Activated CD4-positive, alpha-beta T cell treated with anti-CD3 and anti-CD28 coated beads, Interleukin-2, amount 10 ng/mL, durations not matched to agents 7 days and 5 days (primary cell): ENCODE measurements at regions of chr5 and their contacts with region 1.

Region 1: GRCh38 chr5:148740966-148741742 is 85.3 kb upstream of the ADRB2 start:
- DNase-seq: no peak
- H3K4me3 Mint-ChIP-seq: no peak overlapping the region
- H3K27ac Mint-ChIP-seq: no peak overlapping the region
- H3K4me1 Mint-ChIP-seq: no peaks in the 10 kb centered on the region
- H3K27me3 Mint-ChIP-seq: peaks cover 20% of the 10 kb centered on the region

Region 2: DNA sequence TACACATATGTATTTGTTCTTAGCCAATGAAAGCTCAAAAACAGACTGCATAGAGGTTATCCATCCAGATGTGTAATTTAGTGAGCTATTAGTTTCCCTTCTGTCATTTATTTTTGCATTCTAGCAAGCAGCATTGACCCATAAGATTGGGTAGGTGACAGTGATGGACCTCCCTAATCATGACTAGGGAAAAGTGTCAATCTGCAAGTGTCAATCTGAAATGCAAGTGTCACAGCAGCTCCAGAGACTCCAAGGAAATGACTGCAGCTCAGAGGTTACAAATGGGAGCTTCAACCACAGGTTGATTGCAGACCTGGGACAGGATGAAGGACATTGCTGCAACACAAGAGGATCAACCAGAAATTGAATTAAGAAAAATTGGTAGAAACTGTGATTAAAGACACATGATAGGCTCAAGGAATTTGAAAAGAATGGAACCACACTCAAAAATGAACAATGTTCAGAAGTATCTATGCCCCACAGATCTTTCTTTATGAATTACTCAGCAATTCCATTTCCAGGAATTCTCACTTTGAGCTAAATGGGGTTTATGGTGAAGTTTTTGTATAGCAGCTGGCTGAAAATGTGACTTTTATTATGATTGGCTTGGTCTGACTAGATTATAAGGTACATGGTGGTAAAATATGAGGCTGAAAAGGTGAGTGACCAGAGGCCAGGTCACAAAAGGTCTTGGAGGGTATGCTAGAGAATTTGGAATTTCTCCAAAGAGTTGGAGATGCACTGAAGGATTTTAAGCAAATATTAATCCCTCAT is 27.2 kb before region 1 on chr5:
- CTCF ChIA-PET with region 1: no interaction called
- POLR2A ChIA-PET with region 1: no interaction called
- DNase-seq: no peak
- H3K4me3 Mint-ChIP-seq: no peak overlapping the region
- H3K27ac Mint-ChIP-seq: no peak overlapping the region
- H3K4me1 Mint-ChIP-seq: no peaks in the 10 kb centered on the region
- H3K27me3 Mint-ChIP-seq: peaks cover 13% of the 10 kb centered on the region

Region 3: DNA sequence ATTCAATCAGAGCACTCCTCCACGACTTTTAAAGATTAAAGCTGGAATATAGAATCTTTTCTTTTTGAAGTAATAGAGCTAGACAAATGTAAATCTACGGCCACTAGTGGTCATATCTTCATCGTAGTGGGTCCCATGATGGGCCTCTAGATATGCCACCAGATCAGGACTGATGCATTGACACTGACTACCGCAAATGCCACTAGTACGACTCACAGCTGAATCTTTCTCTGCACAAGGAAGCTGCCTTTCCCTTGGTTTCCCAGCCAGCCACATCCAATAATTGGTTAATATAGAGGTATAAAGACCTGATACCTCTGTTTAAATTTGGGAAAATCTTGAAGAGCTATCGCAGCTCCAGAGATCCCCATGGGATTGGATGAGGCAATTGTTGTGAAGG is 47.5 kb after region 1 on chr5:
- CTCF ChIA-PET with region 1: no interaction called
- POLR2A ChIA-PET with region 1: no interaction called
- DNase-seq: no peak
- H3K4me3 Mint-ChIP-seq: no peak overlapping the region
- H3K27ac Mint-ChIP-seq: no peak overlapping the region
- H3K4me1 Mint-ChIP-seq: peaks cover 21% of the 10 kb centered on the region
- H3K27me3 Mint-ChIP-seq: peaks cover 21% of the 10 kb centered on the region

Region 4: DNA sequence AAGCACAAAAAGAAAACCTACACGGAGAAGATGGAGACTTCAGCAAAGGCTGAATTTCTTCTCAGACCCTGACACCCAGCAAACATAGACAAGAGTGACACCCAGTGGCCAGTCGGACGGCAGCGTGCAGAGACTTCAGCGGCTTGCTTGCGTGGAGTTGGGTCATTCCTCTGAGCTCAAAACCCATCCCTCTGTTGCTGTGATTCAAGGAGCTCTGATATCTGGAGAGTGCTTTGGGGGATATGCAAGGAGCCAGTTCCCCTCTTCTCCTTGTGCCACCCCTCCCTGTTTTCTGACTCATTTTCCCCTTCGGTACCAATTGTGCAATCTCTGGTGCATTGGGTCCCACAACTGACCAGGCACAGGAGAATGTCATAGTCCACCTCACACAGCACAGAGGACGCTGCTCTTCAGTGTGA is 294.2 kb after region 1 on chr5:
- CTCF ChIA-PET with region 1: interaction called, 15 read pairs
- POLR2A ChIA-PET with region 1: no interaction called
- DNase-seq: peak; percentile 72
- H3K4me3 Mint-ChIP-seq: no peak overlapping the region
- H3K27ac Mint-ChIP-seq: no peak overlapping the region
- H3K4me1 Mint-ChIP-seq: peaks cover 31% of the 10 kb centered on the region
- H3K27me3 Mint-ChIP-seq: no peaks in the 10 kb centered on the region